Caco-2 (cell line): ENCODE measurements at regions of chr6 and their contacts with region 1.

Region 1: DNA sequence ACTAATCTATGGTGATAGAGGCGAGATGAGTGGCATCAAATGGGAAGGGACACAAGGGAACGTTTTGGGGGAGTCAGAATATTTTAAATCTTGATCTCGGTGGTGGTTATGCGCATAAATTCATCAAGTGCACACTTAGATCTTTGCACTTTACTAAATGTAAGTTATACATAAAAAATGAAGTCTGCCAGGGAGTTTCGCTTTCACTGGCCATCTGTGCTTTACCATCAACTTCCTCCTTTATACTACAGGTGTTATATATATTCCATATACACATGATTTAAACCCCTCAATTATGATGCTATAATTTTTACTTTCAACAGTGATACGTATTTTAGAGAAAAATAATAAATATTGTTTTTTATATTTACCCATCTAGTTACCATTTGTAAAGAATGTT is 97.6 kb upstream of the AKIRIN2 start:
- DNase-seq: no peak
- H3K4me3 ChIP-seq: no peak overlapping the region
- H3K4me3 Mint-ChIP-seq: peak overlapping the region; percentile 8
- H3K27ac Mint-ChIP-seq: peak overlapping the region; percentile 63
- H3K4me1 ChIP-seq: peaks cover 20% of the 10 kb centered on the region
- H3K4me1 Mint-ChIP-seq: peaks cover 35% of the 10 kb centered on the region
- H3K27me3 ChIP-seq: no peaks in the 10 kb centered on the region
- H3K27me3 Mint-ChIP-seq: no peaks in the 10 kb centered on the region
- CTCF ChIP-seq: no peak

Region 2: GRCh38 chr6:87472525-87473418 is 326.9 kb before region 1 on chr6 and contains the start of gene SLC35A1:
- CTCF ChIA-PET with region 1: no interaction called
- POLR2A ChIA-PET with region 1: no interaction called
- intact Hi-C with region 1: loop called (anchors 2 kb)
- DNase-seq: peak; percentile 73 to 86
- H3K4me3 ChIP-seq: peak within 1 kb of the TSS; percentile 84
- H3K4me3 Mint-ChIP-seq: peak within 1 kb of the TSS; percentile 84
- H3K27ac Mint-ChIP-seq: peak within 1 kb of the TSS; percentile 93
- H3K4me1 ChIP-seq: no peaks in the 10 kb centered on the region
- H3K4me1 Mint-ChIP-seq: no peaks in the 10 kb centered on the region
- H3K27me3 ChIP-seq: no peaks in the 10 kb centered on the region
- H3K27me3 Mint-ChIP-seq: peaks cover 2% of the 10 kb centered on the region
- CTCF ChIP-seq: peak; percentile 14 to 25
- total RNA-seq, gene SLC35A1: 12.3 and 12.7 TPM in 2 replicates

Region 3: GRCh38 chr6:87671555-87672029 is 128.1 kb before region 1 on chr6:
- CTCF ChIA-PET with region 1: no interaction called
- POLR2A ChIA-PET with region 1: no interaction called
- intact Hi-C with region 1: loop called (anchors 5 kb)
- DNase-seq: peak; percentile 60 to 74
- H3K4me3 ChIP-seq: no peak overlapping the region
- H3K4me3 Mint-ChIP-seq: peak overlapping the region; percentile 9
- H3K27ac Mint-ChIP-seq: peak overlapping the region; percentile 82
- H3K4me1 ChIP-seq: peaks cover 31% of the 10 kb centered on the region
- H3K4me1 Mint-ChIP-seq: peaks cover 21% of the 10 kb centered on the region
- H3K27me3 ChIP-seq: no peaks in the 10 kb centered on the region
- H3K27me3 Mint-ChIP-seq: no peaks in the 10 kb centered on the region
- CTCF ChIP-seq: no peak

Region 4: DNA sequence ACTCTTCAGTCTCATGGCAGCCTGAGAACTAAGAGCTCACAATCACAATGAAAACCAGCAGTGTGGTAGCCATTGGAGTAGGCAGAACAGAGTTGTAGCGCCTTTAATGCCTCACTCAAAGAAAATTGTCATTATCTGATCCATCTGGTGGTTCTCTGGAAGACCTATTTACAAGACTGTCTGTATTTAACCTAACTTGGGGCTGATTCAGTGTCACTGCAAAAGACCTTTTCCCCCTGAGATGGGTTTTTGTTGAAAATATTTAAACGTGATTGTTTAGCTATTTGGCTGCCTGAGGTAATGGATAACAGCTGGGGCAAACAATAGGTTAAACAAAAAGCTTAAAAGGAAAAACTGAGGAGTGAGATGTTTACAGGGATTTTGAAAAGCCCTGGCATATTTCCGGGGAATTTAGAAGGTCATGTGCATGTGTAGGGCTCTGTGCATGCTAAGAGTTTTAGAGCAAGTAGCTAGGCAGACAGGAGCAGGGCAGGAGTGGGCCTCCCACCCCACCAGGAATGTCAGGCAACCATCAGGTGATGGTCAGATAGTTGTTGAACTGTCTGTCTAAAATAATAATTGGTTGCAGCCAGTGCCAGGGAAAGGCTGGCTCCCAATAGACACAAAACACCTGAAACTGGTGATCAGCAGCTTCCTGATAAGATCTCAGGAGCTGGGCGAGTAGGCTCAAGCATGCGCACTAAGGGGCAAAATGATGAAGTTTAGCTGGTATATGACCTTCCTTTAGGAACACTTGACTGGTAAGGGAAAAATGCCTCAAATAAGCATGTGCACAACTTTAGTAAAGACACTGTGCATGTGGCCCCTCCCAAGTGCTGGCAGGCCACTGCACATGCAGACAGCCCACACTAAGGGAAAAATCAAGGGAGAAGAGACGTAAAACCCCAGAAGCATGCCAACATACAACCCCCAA is 26.8 kb before region 1 on chr6:
- CTCF ChIA-PET with region 1: no interaction called
- POLR2A ChIA-PET with region 1: no interaction called
- intact Hi-C with region 1: no loop called
- DNase-seq: no peak
- H3K4me3 ChIP-seq: no peak overlapping the region
- H3K4me3 Mint-ChIP-seq: no peak overlapping the region
- H3K27ac Mint-ChIP-seq: peak overlapping the region; percentile 50
- H3K4me1 ChIP-seq: peaks cover 16% of the 10 kb centered on the region
- H3K4me1 Mint-ChIP-seq: peaks cover 14% of the 10 kb centered on the region
- H3K27me3 ChIP-seq: no peaks in the 10 kb centered on the region
- H3K27me3 Mint-ChIP-seq: no peaks in the 10 kb centered on the region
- CTCF ChIP-seq: no peak

Region 5: GRCh38 chr6:87784690-87785089 is 15.0 kb before region 1 on chr6:
- CTCF ChIA-PET with region 1: no interaction called
- POLR2A ChIA-PET with region 1: no interaction called
- intact Hi-C with region 1: loop called (anchors 1 kb)
- DNase-seq: no peak
- H3K4me3 ChIP-seq: no peak overlapping the region
- H3K4me3 Mint-ChIP-seq: no peak overlapping the region
- H3K27ac Mint-ChIP-seq: no peak overlapping the region
- H3K4me1 ChIP-seq: 0 out of 2 replicates have a peak, but pooled peaks cover 7% of the 10 kb centered on the region
- H3K4me1 Mint-ChIP-seq: peaks cover 18% of the 10 kb centered on the region
- H3K27me3 ChIP-seq: no peaks in the 10 kb centered on the region
- H3K27me3 Mint-ChIP-seq: no peaks in the 10 kb centered on the region
- CTCF ChIP-seq: no peak

Region 6: GRCh38 chr6:87848574-87848973 is 48.9 kb after region 1 on chr6:
- CTCF ChIA-PET with region 1: no interaction called
- POLR2A ChIA-PET with region 1: no interaction called
- intact Hi-C with region 1: loop called (anchors 2 kb)
- DNase-seq: peak; percentile 46 to 51
- H3K4me3 ChIP-seq: no peak overlapping the region
- H3K4me3 Mint-ChIP-seq: no peak overlapping the region
- H3K27ac Mint-ChIP-seq: no peak overlapping the region
- H3K4me1 ChIP-seq: peaks cover 10% of the 10 kb centered on the region; the same call in 1 of the 2 replicates
- H3K4me1 Mint-ChIP-seq: peaks cover 9% of the 10 kb centered on the region
- H3K27me3 ChIP-seq: no peaks in the 10 kb centered on the region
- H3K27me3 Mint-ChIP-seq: no peaks in the 10 kb centered on the region
- CTCF ChIP-seq: no peak

Region 7: DNA sequence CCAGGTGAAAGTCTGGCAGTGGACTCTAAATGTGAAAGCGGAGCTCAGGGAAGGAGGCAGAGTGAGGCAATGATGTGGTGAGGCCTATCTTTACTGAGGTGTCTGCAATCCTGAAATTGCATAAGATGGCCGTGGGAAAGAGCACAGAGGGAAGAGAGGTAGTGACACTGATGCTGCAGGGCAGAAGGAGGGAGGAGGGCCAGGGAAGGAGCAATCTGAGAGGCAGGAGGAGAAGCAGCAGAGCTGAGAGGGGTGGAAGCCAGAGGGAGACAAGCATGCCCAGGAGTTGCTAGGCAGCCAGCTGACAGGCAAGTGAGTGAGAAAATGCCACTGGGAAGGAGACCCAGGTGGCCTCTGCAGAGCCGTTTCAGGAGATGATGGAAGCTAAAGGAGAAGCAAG is 463.9 kb after region 1 on chr6:
- CTCF ChIA-PET with region 1: no interaction called
- POLR2A ChIA-PET with region 1: no interaction called
- intact Hi-C with region 1: no loop called
- DNase-seq: no peak
- H3K4me3 ChIP-seq: no peak overlapping the region
- H3K4me3 Mint-ChIP-seq: no peak overlapping the region
- H3K27ac Mint-ChIP-seq: no peak overlapping the region
- H3K4me1 ChIP-seq: no peaks in the 10 kb centered on the region
- H3K4me1 Mint-ChIP-seq: no peaks in the 10 kb centered on the region
- H3K27me3 ChIP-seq: no peaks in the 10 kb centered on the region
- H3K27me3 Mint-ChIP-seq: no peaks in the 10 kb centered on the region
- CTCF ChIP-seq: no peak